ENCODE measurements at regions of chr1 and their contacts with region 1.

Region 1: GRCh38 chr1:181479137-181479745 is 4.1 kb upstream of the CACNA1E start:
- DNase-seq: peak; percentile 42
- ATAC-seq: peak; percentile 66
- H3K4me3 Mint-ChIP-seq: no peak overlapping the region
- H3K27ac Mint-ChIP-seq: no peak overlapping the region
- H3K4me1 Mint-ChIP-seq: peaks cover 9% of the 10 kb centered on the region
- H3K27me3 Mint-ChIP-seq: peaks cover 48% of the 10 kb centered on the region

Region 2: GRCh38 chr1:181936768-181937581 is 457.7 kb after region 1 on chr1:
- CTCF ChIA-PET with region 1: interaction called, 45 read pairs
- POLR2A ChIA-PET with region 1: no interaction called
- DNase-seq: peak; percentile 66
- ATAC-seq: peak; percentile 76
- H3K4me3 Mint-ChIP-seq: no peak overlapping the region
- H3K27ac Mint-ChIP-seq: no peak overlapping the region
- H3K4me1 Mint-ChIP-seq: no peaks in the 10 kb centered on the region
- H3K27me3 Mint-ChIP-seq: no peaks in the 10 kb centered on the region